AG04449 (cell line): ENCODE measurements at regions of chr1 and their contacts with region 1.

Region 1: GRCh38 chr1:225772323-225772768 is 5.3 kb upstream of the SRP9 start:
- DNase-seq: no peak
- H3K4me3 ChIP-seq: no peak overlapping the region
- CTCF ChIP-seq: peak; percentile 90

Region 2: GRCh38 chr1:225338545-225338944 is 433.8 kb before region 1 on chr1:
- CTCF ChIA-PET with region 1: no interaction called
- POLR2A ChIA-PET with region 1: no interaction called
- DNase-seq: no peak
- H3K4me3 ChIP-seq: no peak overlapping the region
- CTCF ChIP-seq: no peak

Region 3: DNA sequence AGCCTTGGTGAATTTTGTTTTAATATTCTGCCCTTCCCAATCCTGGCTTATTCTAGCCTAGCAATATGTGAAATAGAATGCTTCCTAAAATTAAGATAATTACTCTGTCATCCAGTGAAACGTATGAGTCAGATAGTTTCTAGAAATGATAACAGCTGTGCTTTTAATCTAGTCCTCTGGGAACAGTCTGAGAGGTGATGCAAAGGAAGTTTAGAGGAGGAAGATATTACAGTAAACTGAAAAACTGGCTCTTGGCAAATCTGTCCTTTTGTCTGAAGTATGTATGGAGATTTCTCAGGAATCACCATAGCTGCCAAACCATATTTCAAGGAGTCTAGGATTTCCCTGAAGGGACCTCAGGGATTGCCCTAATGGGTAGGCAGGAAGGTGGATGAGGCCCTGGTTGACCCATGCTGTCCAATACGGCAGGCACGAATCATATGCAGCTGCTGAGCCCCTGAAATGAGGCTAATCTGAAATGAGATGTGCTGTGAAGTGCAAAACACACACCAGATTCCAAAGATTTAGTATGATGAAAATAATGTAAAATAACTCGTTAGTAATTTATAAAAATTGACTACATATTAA is 273.7 kb before region 1 on chr1:
- CTCF ChIA-PET with region 1: interaction called, 13 read pairs
- POLR2A ChIA-PET with region 1: no interaction called
- DNase-seq: no peak
- H3K4me3 ChIP-seq: no peak overlapping the region
- CTCF ChIP-seq: no peak

Region 4: DNA sequence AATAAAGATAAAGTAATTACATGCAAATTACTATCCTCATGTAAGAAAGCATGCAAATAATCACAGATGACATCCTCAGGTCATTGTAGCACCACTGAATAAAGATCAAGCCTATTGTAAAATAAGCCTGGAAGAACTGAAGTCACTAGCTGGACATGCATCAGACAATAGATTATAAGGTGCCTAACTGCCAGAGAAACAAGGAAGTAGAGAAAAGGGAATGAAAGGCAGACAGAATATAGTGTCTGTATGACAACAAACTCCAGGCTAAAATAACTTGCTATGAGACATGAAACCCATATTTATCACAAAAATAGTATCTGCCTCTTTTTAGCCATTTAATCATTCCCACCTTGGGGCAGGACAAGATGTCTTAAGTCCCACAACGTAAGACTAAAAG is 228.1 kb before region 1 on chr1:
- CTCF ChIA-PET with region 1: interaction called, 15 read pairs
- POLR2A ChIA-PET with region 1: no interaction called
- DNase-seq: no peak
- H3K4me3 ChIP-seq: no peak overlapping the region
- CTCF ChIP-seq: no peak

Region 5: GRCh38 chr1:225572422-225572821 is 199.9 kb before region 1 on chr1:
- CTCF ChIA-PET with region 1: interaction called, 13 read pairs
- POLR2A ChIA-PET with region 1: no interaction called
- DNase-seq: peak; percentile 14
- H3K4me3 ChIP-seq: no peak overlapping the region
- CTCF ChIP-seq: peak; percentile 31

Region 6: DNA sequence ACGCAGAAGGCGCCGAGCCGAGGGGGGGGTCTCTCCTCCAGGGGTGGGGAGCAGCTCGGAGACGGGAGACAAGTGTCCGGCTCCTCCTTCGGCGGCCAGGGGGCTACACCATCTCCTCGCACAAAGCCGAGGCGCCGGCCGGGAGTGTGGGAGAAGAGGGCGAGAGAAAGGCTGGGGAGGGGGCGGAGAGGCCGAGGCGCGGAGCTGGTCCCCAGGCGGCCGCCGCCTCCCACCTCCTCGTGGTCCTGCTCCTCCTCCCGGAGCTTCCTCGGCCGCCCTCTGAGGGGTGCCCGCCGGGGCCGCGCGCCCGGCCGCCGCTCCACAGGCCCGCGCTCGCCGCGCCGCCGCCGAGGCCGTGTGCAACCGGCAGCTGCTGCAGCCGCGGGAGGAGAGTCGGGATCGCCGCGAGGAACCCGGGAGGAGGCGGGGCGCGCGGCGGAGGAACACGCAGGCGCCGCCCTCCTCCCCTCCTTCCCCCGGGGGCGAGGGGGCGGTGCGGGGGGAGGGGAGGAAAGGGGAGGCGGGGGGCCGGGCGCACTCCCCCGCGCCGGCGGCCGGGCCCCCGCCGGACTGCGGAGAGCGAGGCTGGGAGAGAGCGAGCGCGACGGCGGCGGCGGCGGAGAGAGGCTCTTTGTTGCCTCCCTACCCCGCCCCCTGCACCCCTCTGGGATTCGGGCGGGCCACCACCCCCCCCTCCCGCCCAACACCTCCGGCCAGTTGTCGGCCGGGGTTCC is 119.5 kb before region 1 on chr1 and contains the start of gene ENAH:
- CTCF ChIA-PET with region 1: interaction called, 19 read pairs
- POLR2A ChIA-PET with region 1: interaction called, 13 read pairs
- DNase-seq: no peak
- H3K4me3 ChIP-seq: peak within 1 kb of the TSS; percentile 85
- CTCF ChIP-seq: no peak

Region 7: GRCh38 chr1:225911191-225912130 is 139.1 kb after region 1 on chr1:
- CTCF ChIA-PET with region 1: interaction called, 20 read pairs
- POLR2A ChIA-PET with region 1: no interaction called
- DNase-seq: no peak
- H3K4me3 ChIP-seq: no peak overlapping the region; the same call in 1 of the 2 replicates
- CTCF ChIP-seq: peak; percentile 77

Region 8: DNA sequence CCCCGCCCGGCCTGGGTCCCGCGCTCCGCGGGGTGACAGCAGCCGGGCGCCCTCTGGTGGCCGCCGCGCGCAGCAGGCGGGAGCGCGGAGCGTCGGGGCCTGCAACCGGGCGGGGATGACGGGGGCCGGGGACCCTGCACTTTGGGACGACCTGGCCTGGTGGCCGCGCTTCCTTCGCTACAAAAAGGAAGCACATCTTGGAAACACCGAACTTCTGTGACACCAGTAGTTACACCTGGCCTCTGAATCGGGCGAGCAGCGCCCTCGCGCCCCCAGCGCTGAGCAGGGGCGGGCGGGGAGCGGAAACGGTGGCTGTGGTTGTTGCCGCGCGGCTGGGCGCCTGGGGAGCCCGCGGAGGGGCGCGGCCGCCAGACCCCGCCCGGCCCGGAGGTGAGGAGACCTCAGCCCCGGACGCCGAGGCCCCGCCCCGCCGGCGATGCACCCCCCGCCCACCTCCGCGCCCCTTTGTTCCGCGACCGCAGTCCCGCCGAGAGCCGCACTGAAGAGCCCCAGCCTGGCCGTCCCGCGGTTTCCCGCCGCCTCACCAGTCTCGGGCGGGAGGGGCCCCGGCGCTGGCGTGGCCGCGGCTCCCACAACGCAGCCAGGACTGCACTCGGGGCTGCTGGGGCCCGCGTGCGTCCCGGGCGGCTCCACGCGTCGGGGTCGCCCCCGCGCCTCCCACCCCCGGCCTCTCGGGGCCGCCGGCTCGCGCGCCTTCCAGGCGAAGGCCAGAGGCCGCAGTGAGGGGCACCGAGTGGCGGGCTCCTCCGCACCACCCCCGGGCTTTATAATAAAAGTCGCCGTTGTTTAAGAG is 349.4 kb after region 1 on chr1:
- CTCF ChIA-PET with region 1: no interaction called
- POLR2A ChIA-PET with region 1: no interaction called
- DNase-seq: no peak
- H3K4me3 ChIP-seq: peak overlapping the region; percentile 70
- CTCF ChIP-seq: peak; percentile 66